ENCODE measurements at regions of chr16 and their contacts with region 1.

Region 1: GRCh38 chr16:4271176-4272066 is 1.4 kb downstream of the TFAP4 start:
- DNase-seq: peak; percentile 98

Region 2: GRCh38 chr16:4309836-4310266 is 38.4 kb after region 1 on chr16:
- intact Hi-C with region 1: loop called in 1 of 2 experiments (anchors 1 kb)
- DNase-seq: no peak

Region 3: DNA sequence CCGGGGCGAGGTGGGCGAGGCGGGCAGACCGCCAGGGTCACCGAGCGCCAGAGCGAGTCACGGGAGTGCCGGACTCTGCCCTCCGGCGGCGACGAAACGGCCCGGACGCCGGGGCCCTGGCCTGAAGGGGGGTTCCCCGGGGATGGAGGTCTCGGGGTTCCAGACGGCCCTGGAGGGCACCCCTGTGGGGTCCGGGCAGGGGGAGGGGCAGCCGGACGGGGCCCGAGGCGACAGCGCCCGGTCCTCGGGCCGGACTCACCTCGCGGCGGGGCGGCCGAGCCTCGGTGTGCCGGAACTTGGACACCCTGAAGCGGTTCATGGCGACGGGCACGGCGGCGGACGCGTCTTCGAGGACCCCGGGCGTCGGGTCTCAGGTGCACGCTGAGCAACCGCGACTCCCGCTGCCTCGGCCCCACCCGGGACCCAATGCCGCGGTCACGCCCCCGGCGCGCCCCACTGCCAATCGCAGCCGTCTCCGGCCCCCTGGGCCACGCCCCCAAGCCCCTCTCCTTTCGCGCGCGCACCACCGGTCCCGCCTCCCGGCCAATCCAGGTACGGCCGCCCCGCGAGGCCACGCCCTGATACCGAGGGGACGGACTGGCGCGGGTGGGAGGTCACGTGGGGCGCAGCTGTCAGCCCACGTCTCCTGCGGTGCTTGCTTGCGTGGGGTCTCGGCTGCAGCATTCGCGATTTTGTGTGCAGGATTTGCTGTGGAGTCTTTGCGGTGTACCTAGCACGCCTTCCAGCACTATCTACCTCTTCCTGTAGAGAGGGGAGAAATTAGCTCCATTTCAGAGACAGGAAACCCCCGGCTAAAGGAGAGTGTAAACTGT is 145.0 kb after region 1 on chr16 and contains the start of gene CORO7:
- intact Hi-C with region 1: loop called in 1 of 2 experiments (anchors 10 kb)
- DNase-seq: peak; percentile 99
- total RNA-seq, gene CORO7: 28.5 to 29.5 TPM

Measured in posterior vena cava (tissue), 2 donors.